A549 (cell line): ENCODE measurements at regions of chr16 and their contacts with region 1.

Region 1: DNA sequence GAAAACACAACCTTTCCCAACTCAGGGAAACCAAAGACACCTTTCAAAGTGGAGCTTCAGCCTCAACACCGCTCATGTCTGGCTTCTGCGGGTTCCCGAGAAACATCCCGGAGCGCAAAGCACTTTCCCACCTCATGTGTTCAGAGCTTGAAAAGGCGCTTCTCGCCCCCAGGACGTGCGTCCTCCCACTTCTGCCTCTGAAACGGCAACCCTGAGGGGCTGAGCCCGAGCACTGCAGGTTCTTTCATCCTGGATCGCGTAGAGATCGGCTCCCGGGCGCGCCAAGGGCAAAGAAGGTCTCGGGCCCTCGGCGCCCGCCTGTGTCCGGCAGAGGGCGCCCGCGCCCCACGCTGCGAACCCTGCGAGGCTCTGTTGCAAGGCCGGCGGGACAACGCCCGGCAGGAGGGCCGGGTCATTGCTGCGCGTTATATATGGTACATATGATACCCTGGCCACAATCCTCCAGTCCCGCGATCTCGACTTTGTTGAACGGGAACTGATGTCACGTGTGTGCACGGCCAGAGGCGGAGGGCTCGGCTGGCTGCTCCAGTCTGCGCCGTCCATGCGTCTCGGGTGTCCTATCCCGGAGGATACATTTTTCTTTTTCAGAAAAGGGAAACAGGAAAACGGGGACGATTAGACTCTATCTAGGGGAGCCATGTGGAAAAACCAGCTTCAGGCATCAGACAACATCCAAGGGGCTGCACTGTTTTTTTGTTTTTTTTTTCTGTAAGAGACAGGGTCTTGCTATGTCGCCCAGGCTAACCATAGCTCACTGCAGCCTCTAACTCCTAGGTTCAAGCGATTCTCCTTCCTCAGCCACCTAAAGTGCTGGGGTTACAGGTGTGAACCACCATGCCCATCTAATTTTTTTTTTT is 19.1 kb downstream of the COQ7 start:
- DNase-seq: peak; percentile 91 to 97
- ATAC-seq: peak; percentile 98 to 100
- H3K4me3 ChIP-seq: peak overlapping the region; percentile 45
- H3K27ac ChIP-seq: peak overlapping the region; percentile 75 to 86
- H3K4me1 ChIP-seq: peaks cover 6% of the 10 kb centered on the region; the same call in 2 of the 3 replicates
- CTCF ChIP-seq: peak; percentile 99
- EP300 ChIP-seq: no peak
- POLR2A ChIP-seq: peak; percentile 71
- RAD21 ChIP-seq: peak; percentile 98 to 100

Region 2: GRCh38 chr16:19044769-19045168 is 41.8 kb before region 1 on chr16:
- CTCF ChIA-PET with region 1: no interaction called
- POLR2A ChIA-PET with region 1: no interaction called
- DNase-seq: no peak
- ATAC-seq: no peak
- H3K4me3 ChIP-seq: no peak overlapping the region
- H3K27ac ChIP-seq: no peak overlapping the region
- H3K4me1 ChIP-seq: no peaks in the 10 kb centered on the region
- CTCF ChIP-seq: no peak
- EP300 ChIP-seq: no peak
- POLR2A ChIP-seq: no peak
- RAD21 ChIP-seq: no peak

Region 3: DNA sequence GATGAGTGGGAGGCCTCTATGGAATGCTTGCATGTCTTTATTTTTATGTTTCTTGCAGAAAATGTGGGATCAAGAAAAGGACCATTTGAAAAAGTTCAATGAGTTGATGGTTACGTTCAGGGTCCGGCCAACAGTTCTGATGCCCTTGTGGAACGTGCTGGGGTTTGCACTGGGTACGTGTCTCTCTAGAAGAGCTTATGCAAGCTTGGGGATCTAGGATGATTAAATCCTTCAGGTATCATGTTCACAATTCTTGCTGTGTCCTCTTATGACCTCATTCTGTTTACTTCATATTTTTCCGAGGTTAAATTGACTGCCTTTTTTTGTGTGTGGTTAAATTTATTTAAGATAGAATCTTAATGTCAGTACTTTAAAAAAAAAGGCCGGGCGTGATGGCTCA is 12.7 kb before region 1 on chr16:
- CTCF ChIA-PET with region 1: interaction called, 33 read pairs
- POLR2A ChIA-PET with region 1: no interaction called
- DNase-seq: no peak
- ATAC-seq: no peak
- H3K4me3 ChIP-seq: no peak overlapping the region
- H3K27ac ChIP-seq: no peak overlapping the region
- H3K4me1 ChIP-seq: 0 out of 3 replicates have a peak, but pooled peaks cover 1% of the 10 kb centered on the region
- CTCF ChIP-seq: no peak
- EP300 ChIP-seq: no peak
- POLR2A ChIP-seq: no peak
- RAD21 ChIP-seq: no peak

Region 4: DNA sequence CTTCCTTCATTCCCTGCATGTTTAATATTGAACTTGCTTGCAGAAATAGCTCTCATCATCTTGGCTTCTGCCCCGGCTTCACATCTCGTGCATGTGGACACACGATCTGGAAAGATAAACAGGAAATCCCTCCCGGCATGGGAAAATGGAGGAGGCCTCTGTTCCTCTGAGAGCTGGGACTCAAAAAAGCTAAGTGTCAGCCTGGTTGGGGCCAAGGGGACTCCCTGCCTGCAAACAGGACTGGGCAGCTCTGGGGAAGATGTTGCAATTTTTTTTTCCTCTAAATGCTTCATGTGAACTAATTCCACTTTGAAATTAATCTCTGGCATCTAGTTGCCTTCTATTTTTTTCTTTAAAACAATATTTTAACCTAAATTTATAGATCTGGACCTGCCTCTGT is 52.0 kb after region 1 on chr16:
- CTCF ChIA-PET with region 1: interaction called, 27 read pairs
- POLR2A ChIA-PET with region 1: no interaction called
- DNase-seq: peak; percentile 60 to 84
- ATAC-seq: peak; percentile 40 to 64; a peak in 4 of 6 replicates
- H3K4me3 ChIP-seq: no peak overlapping the region
- H3K27ac ChIP-seq: peak overlapping the region; percentile 76 to 85
- H3K4me1 ChIP-seq: peaks cover 60% of the 10 kb centered on the region
- CTCF ChIP-seq: no peak
- EP300 ChIP-seq: no peak
- POLR2A ChIP-seq: no peak
- RAD21 ChIP-seq: no peak

Region 5: DNA sequence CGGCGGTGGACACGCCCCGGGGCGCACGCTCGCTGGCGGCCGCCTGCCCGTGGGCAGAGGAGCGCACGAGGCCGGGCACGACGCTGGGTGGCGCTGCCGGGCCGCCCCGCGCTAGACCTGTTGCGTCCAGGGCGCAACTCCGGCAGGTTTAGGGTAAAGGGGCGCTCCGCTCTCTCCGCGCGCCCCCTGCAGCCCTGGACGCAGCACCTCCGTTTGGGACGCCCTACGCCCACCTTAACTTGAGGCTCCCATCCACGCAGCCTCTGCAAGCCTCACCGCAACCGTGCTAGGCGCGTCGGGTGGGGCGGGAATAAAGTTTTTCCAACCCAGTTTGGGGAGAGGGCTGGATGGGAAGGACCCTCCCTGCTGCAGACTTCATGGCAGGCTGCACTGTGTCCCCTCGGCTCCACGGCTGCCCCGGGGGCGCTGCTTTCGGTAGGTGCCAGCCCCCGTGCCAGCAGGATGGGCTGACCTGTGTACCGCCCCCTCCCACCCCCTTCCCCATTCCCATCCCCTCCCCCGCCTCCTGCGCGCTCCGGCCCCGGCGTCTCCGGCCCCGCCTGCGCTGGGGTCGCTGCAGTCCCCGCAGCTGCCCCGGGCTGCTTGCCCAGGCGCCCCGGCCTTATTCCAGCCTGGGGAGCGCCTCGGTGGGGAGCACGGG is 81.3 kb after region 1 on chr16 and contains the start of gene SYT17:
- CTCF ChIA-PET with region 1: interaction called, 23 read pairs
- POLR2A ChIA-PET with region 1: no interaction called
- DNase-seq: peak; percentile 80 to 90
- ATAC-seq: peak; percentile 94 to 95
- H3K4me3 ChIP-seq: peak within 1 kb of the TSS; percentile 84
- H3K27ac ChIP-seq: peak within 1 kb of the TSS; percentile 91 to 96
- H3K4me1 ChIP-seq: peaks cover 26% of the 10 kb centered on the region
- CTCF ChIP-seq: peak; percentile 97
- EP300 ChIP-seq: no peak
- POLR2A ChIP-seq: peak; percentile 36; the same call in 1 of the 2 replicates
- RAD21 ChIP-seq: peak; percentile 80 to 96
- polyA plus RNA-seq, gene SYT17: 18.7 and 28.1 TPM in 2 replicates

Region 6: DNA sequence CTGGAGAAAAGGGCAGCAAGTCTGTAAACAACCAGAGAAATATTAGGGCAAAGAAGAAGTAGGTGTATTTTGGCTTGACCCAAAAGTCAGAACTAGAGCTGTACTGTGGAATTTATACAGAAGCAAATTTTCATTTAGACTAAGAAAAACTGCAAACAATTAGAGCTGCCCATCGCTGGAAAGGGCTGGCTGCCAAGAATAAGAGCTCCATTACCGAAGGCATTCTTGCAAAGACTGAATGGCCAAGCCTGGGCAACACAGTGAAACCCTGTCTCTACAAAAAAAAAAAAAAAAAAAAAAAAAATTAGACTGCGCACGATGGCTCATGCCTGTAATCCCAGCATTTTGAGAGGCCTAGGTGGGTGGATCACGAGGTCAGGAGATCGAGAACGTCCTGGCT is 277.2 kb after region 1 on chr16:
- CTCF ChIA-PET with region 1: interaction called, 151 read pairs
- POLR2A ChIA-PET with region 1: no interaction called
- DNase-seq: no peak
- ATAC-seq: no peak
- H3K4me3 ChIP-seq: no peak overlapping the region
- H3K27ac ChIP-seq: no peak overlapping the region
- H3K4me1 ChIP-seq: no peaks in the 10 kb centered on the region
- CTCF ChIP-seq: no peak
- EP300 ChIP-seq: no peak
- POLR2A ChIP-seq: no peak
- RAD21 ChIP-seq: no peak

Region 7: GRCh38 chr16:19389246-19389645 is 302.7 kb after region 1 on chr16:
- CTCF ChIA-PET with region 1: interaction called, 18 read pairs
- POLR2A ChIA-PET with region 1: interaction called, 3 read pairs
- DNase-seq: peak; percentile 43 to 68
- ATAC-seq: peak; percentile 82 to 86
- H3K4me3 ChIP-seq: no peak overlapping the region
- H3K27ac ChIP-seq: peak overlapping the region in 1 of 2 experiments; percentile 18; a peak in 1 of 6 replicates
- H3K4me1 ChIP-seq: peaks cover 25% of the 10 kb centered on the region
- CTCF ChIP-seq: peak; percentile 82
- EP300 ChIP-seq: no peak
- POLR2A ChIP-seq: no peak
- RAD21 ChIP-seq: peak; percentile 81 to 83